SK-N-SH (cell line): ENCODE measurements at regions of chr12 and their contacts with region 1.

Region 1: DNA sequence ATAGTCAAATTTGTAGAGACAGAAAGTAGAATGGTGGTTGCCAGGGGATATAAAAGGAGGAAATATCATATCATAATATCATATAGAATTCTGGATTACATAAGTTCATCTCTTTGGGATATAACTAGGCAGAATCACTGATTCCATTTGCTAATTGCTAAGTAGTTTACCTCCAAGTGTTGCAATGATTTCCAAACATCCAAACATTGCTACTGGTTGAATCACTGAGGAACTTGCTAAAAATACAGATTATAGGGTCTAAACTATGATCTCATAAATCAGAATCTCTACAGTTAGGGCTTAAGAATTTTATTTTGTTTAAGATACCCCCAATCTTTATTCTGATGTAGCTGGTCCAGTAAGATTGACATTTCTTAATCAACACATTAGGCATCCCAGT is 16.1 kb upstream of the TAS2R42 start:
- DNase-seq: no peak
- H3K4me3 ChIP-seq: no peak overlapping the region
- H3K27ac ChIP-seq: no peak overlapping the region
- H3K4me1 ChIP-seq: no peaks in the 10 kb centered on the region
- H3K27me3 ChIP-seq: no peaks in the 10 kb centered on the region
- CTCF ChIP-seq: no peak
- EP300 ChIP-seq: no peak
- RAD21 ChIP-seq: no peak

Region 2: DNA sequence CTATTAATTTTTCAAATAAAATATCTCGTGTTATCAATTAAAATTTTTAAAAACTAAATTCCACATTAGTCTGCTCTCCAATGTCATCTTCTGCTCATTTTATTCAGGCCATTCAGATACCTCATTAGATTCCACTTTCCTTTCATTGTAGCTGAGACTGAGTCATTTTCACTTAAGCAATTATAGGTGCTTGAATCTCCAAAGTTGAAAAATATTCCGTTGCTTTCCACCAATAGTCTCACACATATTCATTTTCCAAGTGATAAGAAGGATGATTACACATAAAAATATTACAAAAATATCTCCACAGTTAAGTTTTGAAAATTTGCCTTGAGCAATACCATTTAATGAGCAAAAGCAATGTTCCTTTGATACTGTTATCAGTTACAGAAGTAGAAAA is 443.2 kb before region 1 on chr12:
- CTCF ChIA-PET with region 1: interaction called, 13 read pairs
- POLR2A ChIA-PET with region 1: no interaction called
- DNase-seq: no peak
- H3K4me3 ChIP-seq: no peak overlapping the region
- H3K27ac ChIP-seq: no peak overlapping the region
- H3K4me1 ChIP-seq: no peaks in the 10 kb centered on the region
- H3K27me3 ChIP-seq: no peaks in the 10 kb centered on the region
- CTCF ChIP-seq: no peak
- EP300 ChIP-seq: no peak
- RAD21 ChIP-seq: no peak

Region 3: GRCh38 chr12:10771132-10771733 is 431.6 kb before region 1 on chr12:
- CTCF ChIA-PET with region 1: interaction called, 138 read pairs
- POLR2A ChIA-PET with region 1: no interaction called
- DNase-seq: peak; percentile 22
- H3K4me3 ChIP-seq: no peak overlapping the region
- H3K27ac ChIP-seq: no peak overlapping the region
- H3K4me1 ChIP-seq: no peaks in the 10 kb centered on the region
- H3K27me3 ChIP-seq: peaks cover 25% of the 10 kb centered on the region; the same call in 1 of the 2 replicates
- CTCF ChIP-seq: peak; percentile 78
- EP300 ChIP-seq: no peak
- RAD21 ChIP-seq: peak; percentile 87

Region 4: GRCh38 chr12:10779103-10779502 is 423.7 kb before region 1 on chr12:
- CTCF ChIA-PET with region 1: interaction called, 138 read pairs
- POLR2A ChIA-PET with region 1: no interaction called
- DNase-seq: no peak
- H3K4me3 ChIP-seq: no peak overlapping the region
- H3K27ac ChIP-seq: no peak overlapping the region
- H3K4me1 ChIP-seq: no peaks in the 10 kb centered on the region
- H3K27me3 ChIP-seq: peaks cover 3% of the 10 kb centered on the region; the same call in 1 of the 2 replicates
- CTCF ChIP-seq: no peak
- EP300 ChIP-seq: no peak
- RAD21 ChIP-seq: no peak

Region 5: DNA sequence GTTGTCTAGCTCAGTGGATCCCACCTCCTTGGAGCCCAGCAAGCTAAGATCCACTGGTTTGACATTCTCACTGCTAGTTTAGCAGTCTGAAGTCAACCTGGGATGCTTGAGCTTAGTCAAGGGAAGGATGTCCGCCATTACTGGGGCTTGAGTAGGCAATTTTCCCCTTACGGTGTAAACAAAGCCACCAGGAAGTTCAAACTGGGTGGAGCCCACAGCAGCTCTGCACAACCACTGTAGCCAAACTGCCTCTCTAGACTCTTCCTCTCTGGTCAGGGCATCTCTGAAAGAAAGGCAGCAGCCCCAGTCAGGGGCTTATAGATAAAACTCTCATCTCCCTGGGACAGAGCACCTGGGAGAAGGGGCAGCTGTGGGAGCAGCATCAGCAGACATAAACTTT is 93.9 kb before region 1 on chr12:
- CTCF ChIA-PET with region 1: no interaction called
- POLR2A ChIA-PET with region 1: no interaction called
- DNase-seq: no peak
- H3K4me3 ChIP-seq: no peak overlapping the region
- H3K27ac ChIP-seq: no peak overlapping the region
- H3K4me1 ChIP-seq: no peaks in the 10 kb centered on the region
- H3K27me3 ChIP-seq: no peaks in the 10 kb centered on the region
- CTCF ChIP-seq: no peak
- EP300 ChIP-seq: no peak
- RAD21 ChIP-seq: no peak

Region 6: DNA sequence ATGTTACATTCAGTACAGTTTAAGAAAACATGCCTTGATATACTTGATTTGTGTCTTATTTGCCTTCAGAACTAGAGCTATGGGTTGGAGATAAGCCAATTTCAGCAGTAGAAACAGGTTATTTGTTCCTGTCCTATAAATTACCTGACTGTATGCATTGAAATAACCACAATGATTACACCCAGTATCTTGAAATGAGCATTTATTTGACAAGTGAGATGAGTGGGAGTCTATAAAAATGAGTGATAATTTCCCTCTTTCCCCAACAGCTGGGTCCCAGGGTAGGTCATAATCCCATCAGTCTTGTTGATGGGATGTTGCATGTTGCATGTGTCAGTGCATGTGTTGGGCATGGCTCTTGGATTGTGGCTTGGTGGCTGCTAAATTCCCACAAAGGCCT is 19.8 kb before region 1 on chr12:
- CTCF ChIA-PET with region 1: interaction called, 12 read pairs
- POLR2A ChIA-PET with region 1: no interaction called
- DNase-seq: no peak
- H3K4me3 ChIP-seq: no peak overlapping the region
- H3K27ac ChIP-seq: no peak overlapping the region
- H3K4me1 ChIP-seq: no peaks in the 10 kb centered on the region; a peak in 1 of 4 replicates
- H3K27me3 ChIP-seq: no peaks in the 10 kb centered on the region
- CTCF ChIP-seq: no peak
- EP300 ChIP-seq: no peak
- RAD21 ChIP-seq: no peak